Activated CD4-positive, alpha-beta memory T cell treated with anti-CD3 and anti-CD28 coated beads, Interleukin-2, amount 10 ng/mL, durations not matched to agents 7 days and 5 days (primary cell): ENCODE measurements at regions of chr2 and their contacts with region 1.

Region 1: DNA sequence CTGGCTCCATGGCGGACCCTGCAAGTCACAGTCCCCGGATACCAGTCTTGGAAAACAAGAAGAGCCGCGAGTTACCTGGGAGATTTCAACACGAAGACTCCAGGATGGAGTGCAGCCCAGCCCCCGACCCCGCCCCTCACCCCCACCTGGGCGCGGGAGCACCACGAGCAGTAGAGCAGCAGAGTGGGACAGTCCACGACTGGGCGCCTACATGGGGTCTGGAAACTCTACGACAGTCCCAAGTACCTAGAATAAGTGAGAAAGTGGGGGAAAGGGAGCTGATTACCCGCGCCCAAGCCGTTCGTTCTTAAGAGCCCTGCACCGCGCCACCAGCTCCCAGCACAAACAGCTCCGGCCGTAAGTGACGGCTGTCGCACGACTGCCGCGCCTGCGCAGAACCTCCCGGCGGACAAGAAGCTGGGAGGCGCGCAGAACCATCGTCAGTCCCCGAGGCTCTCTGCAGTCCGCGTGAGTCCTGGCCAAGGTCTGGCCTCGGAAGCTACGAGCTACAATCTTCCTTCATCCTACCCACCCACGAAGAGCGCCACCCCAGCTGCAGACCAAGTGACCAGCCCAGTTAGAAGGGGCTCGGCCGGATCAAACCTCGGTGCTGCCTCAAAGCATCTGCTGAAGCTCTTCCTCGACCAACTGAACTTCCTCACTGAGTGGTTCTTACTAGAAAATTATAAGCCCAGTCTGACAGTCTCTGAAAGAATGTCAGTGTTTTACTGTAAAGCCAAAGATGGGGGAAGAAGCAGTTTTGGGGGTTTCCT is at the start of gene DPY30:
- DNase-seq: peak; percentile 92
- H3K4me3 Mint-ChIP-seq: peak within 1 kb of the TSS; percentile 83
- H3K27ac Mint-ChIP-seq: peak within 1 kb of the TSS; percentile 90
- H3K4me1 Mint-ChIP-seq: peaks cover 19% of the 10 kb centered on the region
- H3K27me3 Mint-ChIP-seq: no peaks in the 10 kb centered on the region
- total RNA-seq, gene DPY30: 68.9 to 74.2 TPM

Region 2: GRCh38 chr2:31997653-31998052 is 42.0 kb before region 1 on chr2:
- CTCF ChIA-PET with region 1: no interaction called
- POLR2A ChIA-PET with region 1: interaction called, 10 read pairs
- DNase-seq: no peak
- H3K4me3 Mint-ChIP-seq: no peak overlapping the region
- H3K27ac Mint-ChIP-seq: peak overlapping the region; percentile 52
- H3K4me1 Mint-ChIP-seq: peaks cover 43% of the 10 kb centered on the region
- H3K27me3 Mint-ChIP-seq: no peaks in the 10 kb centered on the region

Region 3: DNA sequence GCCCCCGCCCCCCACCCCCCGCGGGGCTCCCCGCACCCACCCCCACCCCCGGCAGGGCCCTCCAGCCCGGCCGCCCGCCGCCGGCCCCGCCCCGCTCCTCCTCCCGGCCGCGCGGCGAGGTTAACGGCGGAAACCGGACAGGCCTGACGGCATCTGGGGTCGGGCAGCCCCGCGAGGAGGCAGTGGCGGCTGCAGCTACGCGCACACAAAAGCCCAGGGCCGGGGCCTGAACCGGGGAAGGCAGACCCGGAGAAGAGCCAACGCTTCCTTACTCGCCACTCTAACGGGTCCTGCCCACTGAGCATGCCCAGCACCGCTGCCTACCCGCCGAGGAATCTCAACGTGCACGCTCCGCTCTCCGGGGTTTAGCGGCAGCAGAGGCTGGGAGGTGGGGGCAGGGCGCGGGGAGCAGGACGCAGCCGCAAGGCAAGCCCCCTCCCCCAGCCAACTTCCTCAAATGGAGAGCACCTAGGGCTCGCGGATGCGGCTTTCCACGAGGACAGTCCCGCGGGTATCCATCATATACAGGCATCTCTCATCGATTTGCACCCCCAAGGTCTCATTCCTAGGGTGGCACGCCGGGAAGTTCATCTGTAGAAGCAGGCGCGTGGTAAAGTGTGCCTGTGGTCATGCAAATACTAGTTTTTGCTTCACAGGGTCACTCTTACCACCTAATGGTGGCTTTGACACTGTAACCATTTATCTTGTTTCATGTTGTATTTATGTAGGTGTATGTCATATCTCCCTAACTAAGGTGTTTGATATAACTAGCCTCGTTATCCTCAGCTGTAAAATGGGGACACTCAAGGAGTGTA is 28.8 kb before region 1 on chr2 and contains the start of gene MEMO1:
- CTCF ChIA-PET with region 1: interaction called, 5 read pairs
- POLR2A ChIA-PET with region 1: interaction called, 28 read pairs
- DNase-seq: peak; percentile 91
- H3K4me3 Mint-ChIP-seq: peak within 1 kb of the TSS; percentile 81
- H3K27ac Mint-ChIP-seq: peak within 1 kb of the TSS; percentile 90
- H3K4me1 Mint-ChIP-seq: peaks cover 39% of the 10 kb centered on the region
- H3K27me3 Mint-ChIP-seq: no peaks in the 10 kb centered on the region
- total RNA-seq, gene MEMO1: 40.7 to 41.5 TPM

Region 4: DNA sequence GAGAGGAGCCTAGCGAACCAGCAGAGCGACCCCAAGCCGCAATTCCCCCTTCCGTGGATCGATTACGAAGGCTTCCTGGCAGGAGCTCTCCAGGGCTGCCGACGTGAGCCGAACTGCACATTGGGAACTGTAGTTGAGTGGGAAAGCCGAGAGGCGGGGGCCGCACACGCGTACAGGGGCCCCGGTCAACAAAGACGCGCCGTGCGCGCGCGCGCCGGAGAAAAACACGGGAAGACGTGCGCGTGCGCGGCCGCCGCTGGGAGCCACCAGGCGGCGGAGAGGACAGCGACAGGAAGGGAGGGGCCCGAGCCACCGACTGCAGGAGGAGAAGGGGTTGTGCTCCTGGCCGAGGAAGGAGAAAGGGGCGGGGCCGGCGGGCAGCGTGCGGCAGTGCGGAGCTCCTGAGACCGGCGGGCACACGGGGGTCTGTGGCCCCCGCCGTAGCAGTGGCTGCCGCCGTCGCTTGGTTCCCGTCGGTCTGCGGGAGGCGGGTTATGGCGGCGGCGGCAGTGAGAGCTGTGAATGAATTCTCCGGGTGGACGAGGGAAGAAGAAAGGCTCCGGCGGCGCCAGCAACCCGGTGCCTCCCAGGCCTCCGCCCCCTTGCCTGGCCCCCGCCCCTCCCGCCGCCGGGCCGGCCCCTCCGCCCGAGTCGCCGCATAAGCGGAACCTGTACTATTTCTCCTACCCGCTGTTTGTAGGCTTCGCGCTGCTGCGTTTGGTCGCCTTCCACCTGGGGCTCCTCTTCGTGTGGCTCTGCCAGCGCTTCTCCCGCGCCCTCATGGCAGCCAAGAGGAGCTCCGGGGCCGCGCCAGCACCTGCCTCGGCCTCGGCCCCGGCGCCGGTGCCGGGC is 23.9 kb after region 1 on chr2 and contains the start of gene SPAST:
- CTCF ChIA-PET with region 1: interaction called, 34 read pairs
- POLR2A ChIA-PET with region 1: interaction called, 62 read pairs
- DNase-seq: peak; percentile 97
- H3K4me3 Mint-ChIP-seq: peak within 1 kb of the TSS; percentile 94
- H3K27ac Mint-ChIP-seq: peak within 1 kb of the TSS; percentile 86
- H3K4me1 Mint-ChIP-seq: peaks cover 31% of the 10 kb centered on the region
- H3K27me3 Mint-ChIP-seq: peaks cover 2% of the 10 kb centered on the region
- total RNA-seq, gene SPAST: 21.1 to 21.8 TPM

Region 5: DNA sequence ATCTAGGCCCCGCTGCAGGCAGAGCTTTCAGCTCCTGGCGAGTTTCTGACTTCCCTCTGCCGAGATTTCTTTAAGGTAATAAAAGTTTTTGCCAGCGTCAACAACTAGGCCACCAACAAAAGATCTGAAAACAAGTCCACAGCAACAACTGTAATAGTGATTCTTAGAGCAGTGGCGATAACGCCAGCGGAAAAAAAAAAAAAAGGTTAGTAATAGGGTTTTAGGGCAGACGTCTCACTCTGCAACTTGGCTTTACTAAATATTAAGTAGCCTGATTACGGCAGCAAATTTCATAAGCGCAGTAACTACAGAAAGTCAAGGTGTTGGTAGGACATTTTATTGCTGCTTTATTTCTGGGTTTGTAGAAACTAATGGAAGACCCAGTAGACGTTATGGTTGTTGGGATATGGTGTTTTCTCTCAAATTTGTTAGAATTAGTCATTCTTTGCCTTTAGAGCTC is 126.5 kb after region 1 on chr2:
- CTCF ChIA-PET with region 1: no interaction called
- POLR2A ChIA-PET with region 1: interaction called, 14 read pairs
- DNase-seq: no peak
- H3K4me3 Mint-ChIP-seq: peak overlapping the region; percentile 85
- H3K27ac Mint-ChIP-seq: peak overlapping the region; percentile 89
- H3K4me1 Mint-ChIP-seq: peaks cover 37% of the 10 kb centered on the region
- H3K27me3 Mint-ChIP-seq: no peaks in the 10 kb centered on the region